CD4-positive, alpha-beta T cell (primary cell): ENCODE measurements at regions of chr1 and their contacts with region 1.

Region 1: DNA sequence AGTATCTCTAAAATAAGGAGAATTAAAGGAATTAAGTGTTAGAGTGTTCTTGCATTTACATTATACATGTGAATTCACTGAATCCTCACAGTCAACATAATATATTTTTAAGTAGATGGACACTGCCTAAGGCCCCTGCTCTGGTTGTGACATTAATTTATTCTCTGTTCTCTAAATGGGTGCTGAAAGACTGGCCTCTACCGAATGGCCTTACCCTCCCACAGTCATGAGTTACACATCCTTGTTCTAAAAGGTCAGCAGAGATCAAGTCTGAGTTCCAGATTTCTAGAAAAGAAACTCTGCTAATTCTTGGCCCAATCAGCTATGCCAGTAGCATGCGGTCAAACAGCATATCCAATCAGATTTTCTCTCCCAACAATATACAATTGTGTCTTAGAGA is 193.2 kb downstream of the TM2D1 start:
- DNase-seq: no peak
- ATAC-seq: no peak
- H3K4me3 ChIP-seq: no peak overlapping the region
- H3K4me3 Mint-ChIP-seq: no peak overlapping the region
- H3K27ac ChIP-seq: no peak overlapping the region
- H3K27ac Mint-ChIP-seq: no peak overlapping the region
- H3K4me1 ChIP-seq: no peaks in the 10 kb centered on the region
- H3K4me1 Mint-ChIP-seq: no peaks in the 10 kb centered on the region
- H3K27me3 ChIP-seq: no peaks in the 10 kb centered on the region
- H3K27me3 Mint-ChIP-seq: peaks cover 3% of the 10 kb centered on the region
- CTCF ChIP-seq: no peak

Region 2: DNA sequence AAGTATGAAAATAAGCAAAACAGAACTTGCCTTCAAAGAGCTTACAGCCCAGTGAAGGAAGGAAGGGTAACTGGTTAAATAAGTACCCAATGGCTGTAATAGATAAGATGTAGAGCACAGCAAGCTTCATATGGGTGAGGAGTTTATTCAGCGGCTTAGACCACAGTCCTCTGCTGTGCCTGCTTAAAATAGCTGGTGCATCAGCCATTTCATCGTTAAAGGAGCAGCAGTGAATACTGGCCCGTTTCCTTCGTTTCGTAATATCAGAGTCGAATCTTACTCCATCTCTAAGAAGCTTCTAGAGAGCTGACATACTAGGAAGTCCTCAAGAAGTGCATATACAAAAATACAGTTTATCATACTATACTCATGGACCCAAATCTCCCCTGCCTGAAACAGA is 162.8 kb before region 1 on chr1:
- CTCF ChIA-PET with region 1: no interaction called
- POLR2A ChIA-PET with region 1: no interaction called
- intact Hi-C with region 1: no loop called
- DNase-seq: no peak
- ATAC-seq: no peak
- H3K4me3 ChIP-seq: no peak overlapping the region
- H3K4me3 Mint-ChIP-seq: no peak overlapping the region
- H3K27ac ChIP-seq: no peak overlapping the region
- H3K27ac Mint-ChIP-seq: no peak overlapping the region
- H3K4me1 ChIP-seq: no peaks in the 10 kb centered on the region
- H3K4me1 Mint-ChIP-seq: no peaks in the 10 kb centered on the region
- H3K27me3 ChIP-seq: no peaks in the 10 kb centered on the region
- H3K27me3 Mint-ChIP-seq: no peaks in the 10 kb centered on the region
- CTCF ChIP-seq: no peak

Region 3: GRCh38 chr1:61561666-61562065 is 29.9 kb after region 1 on chr1:
- CTCF ChIA-PET with region 1: no interaction called
- POLR2A ChIA-PET with region 1: no interaction called
- intact Hi-C with region 1: loop called in 1 of 2 experiments (anchors 1 kb)
- DNase-seq: no peak
- ATAC-seq: no peak
- H3K4me3 ChIP-seq: no peak overlapping the region
- H3K4me3 Mint-ChIP-seq: no peak overlapping the region
- H3K27ac ChIP-seq: no peak overlapping the region
- H3K27ac Mint-ChIP-seq: no peak overlapping the region
- H3K4me1 ChIP-seq: no peaks in the 10 kb centered on the region
- H3K4me1 Mint-ChIP-seq: no peaks in the 10 kb centered on the region
- H3K27me3 ChIP-seq: no peaks in the 10 kb centered on the region
- H3K27me3 Mint-ChIP-seq: peaks cover 4% of the 10 kb centered on the region
- CTCF ChIP-seq: no peak